Common myeloid progenitor, CD34-positive (primary cell): ENCODE measurements at regions of chr15 and their contacts with region 1.

Region 1: DNA sequence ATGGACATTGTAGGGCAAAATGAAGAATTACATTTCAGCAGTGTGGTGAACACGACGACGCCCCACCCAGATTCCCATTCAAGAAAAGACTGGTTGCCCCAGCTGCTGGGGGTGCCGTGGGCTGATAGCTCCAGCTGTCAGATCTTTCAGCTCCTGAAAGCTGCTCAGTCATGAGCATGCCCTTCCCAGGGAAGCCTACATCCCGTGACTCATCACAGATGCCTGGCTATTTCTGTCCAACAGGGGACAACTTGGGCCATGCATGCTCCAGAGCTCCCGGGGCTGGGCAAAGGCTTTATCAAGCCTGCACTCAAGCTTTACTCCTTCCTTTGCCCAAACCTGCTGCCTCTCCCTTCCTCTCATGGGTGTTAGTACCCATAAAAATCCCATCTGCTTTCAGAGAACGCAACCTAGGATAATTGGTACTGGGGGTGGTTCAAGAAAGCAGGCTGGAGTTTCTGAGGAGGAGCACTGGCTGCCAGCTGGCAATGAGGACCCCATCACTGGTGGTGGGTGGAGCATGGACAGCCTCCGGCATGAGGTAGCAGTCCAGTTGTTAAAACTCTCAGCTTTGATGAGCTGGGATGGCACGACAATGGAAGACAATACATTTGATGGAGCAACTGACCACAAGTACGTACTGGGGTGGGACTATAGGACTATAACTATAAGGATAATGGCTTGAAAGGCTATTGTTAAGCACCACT is 16.4 kb upstream of the ST8SIA2 start:
- DNase-seq: no peak
- H3K4me3 ChIP-seq: no peak overlapping the region
- H3K27ac ChIP-seq: no peak overlapping the region
- H3K4me1 ChIP-seq: no peaks in the 10 kb centered on the region
- H3K27me3 ChIP-seq: peaks cover 0 to 1% (median 0%) of the 10 kb centered on the region in 5 experiments

Region 2: GRCh38 chr15:92391640-92392039 is 14.4 kb after region 1 on chr15:
- CTCF ChIA-PET with region 1: interaction called, 12 read pairs
- POLR2A ChIA-PET with region 1: no interaction called
- DNase-seq: peak; percentile 35 to 58 (median 50)
- H3K4me3 ChIP-seq: no peak overlapping the region
- H3K27ac ChIP-seq: no peak overlapping the region
- H3K4me1 ChIP-seq: peaks cover 0 to 26% (median 20%) of the 10 kb centered on the region in 4 experiments
- H3K27me3 ChIP-seq: peaks cover 0 to 90% (median 42%) of the 10 kb centered on the region in 5 experiments

Region 3: GRCh38 chr15:92421976-92422375 is 44.7 kb after region 1 on chr15:
- CTCF ChIA-PET with region 1: no interaction called
- POLR2A ChIA-PET with region 1: no interaction called
- DNase-seq: no peak
- H3K4me3 ChIP-seq: no peak overlapping the region
- H3K27ac ChIP-seq: no peak overlapping the region
- H3K4me1 ChIP-seq: no peaks in the 10 kb centered on the region
- H3K27me3 ChIP-seq: peaks cover 0 to 9% (median 2%) of the 10 kb centered on the region in 5 experiments